ENCODE measurements at regions of chr3 and their contacts with region 1.

Region 1: GRCh38 chr3:66047311-66048050 is 8.8 kb upstream of the MAGI1 start:
- DNase-seq: peak; percentile 56
- ATAC-seq: peak; percentile 93 to 95

Region 2: DNA sequence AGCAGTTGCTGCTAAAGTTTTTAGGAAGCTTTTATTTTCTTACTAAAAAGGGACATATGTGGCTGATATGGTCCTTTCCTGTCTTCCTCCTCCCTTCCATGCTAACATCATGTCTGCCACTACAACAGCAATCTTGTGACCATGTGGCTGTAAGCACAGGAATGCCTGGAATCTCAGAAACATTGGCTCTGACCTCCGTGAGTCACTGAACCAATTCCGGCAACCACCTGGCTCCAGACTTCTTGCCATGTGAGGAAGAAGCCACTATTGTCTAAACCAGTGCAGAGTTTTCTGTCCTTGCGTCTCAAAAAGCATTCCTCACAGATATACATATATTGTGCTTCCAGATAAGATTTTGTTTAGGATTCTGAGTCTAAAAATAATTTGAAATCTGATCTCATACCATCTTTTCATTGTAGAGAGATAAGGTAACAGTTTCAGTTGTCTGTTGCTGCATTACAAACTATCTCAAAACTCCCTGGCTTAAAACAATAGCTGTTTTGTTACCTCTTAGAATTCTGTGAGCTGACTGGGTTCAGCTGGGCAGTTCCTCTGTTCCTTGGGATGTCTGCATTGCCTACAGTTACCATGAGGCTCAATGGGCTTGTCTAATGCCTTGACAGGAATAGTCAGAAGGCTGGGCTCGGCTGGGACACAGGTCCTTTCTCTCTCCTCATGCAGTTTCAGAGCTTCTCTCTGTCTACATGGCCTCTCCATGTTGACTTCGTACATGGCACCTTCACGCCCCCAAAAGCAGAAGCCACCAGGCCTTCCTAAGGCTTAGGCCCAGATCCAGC is 68.6 kb after region 1 on chr3:
- intact Hi-C with region 1: loop called in 1 of 2 experiments (anchors 10 kb)
- DNase-seq: peak; percentile 46
- ATAC-seq: peak; percentile 89 to 91

Measured in left cardiac atrium (tissue), 4 donors.